ENCODE measurements at regions of chr12 and their contacts with region 1.

Region 1: GRCh38 chr12:51238510-51239334 is at the start of gene DAZAP2:
- DNase-seq: peak; percentile 92
- H3K4me3 Mint-ChIP-seq: peak within 1 kb of the TSS; percentile 96
- H3K27ac Mint-ChIP-seq: peak within 1 kb of the TSS; percentile 100
- H3K4me1 Mint-ChIP-seq: peaks cover 22% of the 10 kb centered on the region
- H3K27me3 Mint-ChIP-seq: no peaks in the 10 kb centered on the region
- CTCF ChIP-seq: no peak
- total RNA-seq, gene DAZAP2: 74.2 and 93.2 TPM in 2 replicates

Region 2: GRCh38 chr12:51083126-51083833 is 155.4 kb before region 1 on chr12 and contains the start of gene CSRNP2:
- CTCF ChIA-PET with region 1: no interaction called
- POLR2A ChIA-PET with region 1: interaction called, 23 read pairs
- intact Hi-C with region 1: no loop called
- DNase-seq: peak; percentile 93
- H3K4me3 Mint-ChIP-seq: peak within 1 kb of the TSS; percentile 88
- H3K27ac Mint-ChIP-seq: peak within 1 kb of the TSS; percentile 46
- H3K4me1 Mint-ChIP-seq: peaks cover 13% of the 10 kb centered on the region
- H3K27me3 Mint-ChIP-seq: no peaks in the 10 kb centered on the region
- CTCF ChIP-seq: no peak
- total RNA-seq, gene CSRNP2: 41.4 and 46.3 TPM in 2 replicates

Region 3: GRCh38 chr12:51172515-51173431 is 65.9 kb before region 1 on chr12 and contains the start of gene TFCP2:
- CTCF ChIA-PET with region 1: interaction called, 4 read pairs
- POLR2A ChIA-PET with region 1: interaction called, 18 read pairs
- intact Hi-C with region 1: no loop called
- DNase-seq: peak; percentile 95
- H3K4me3 Mint-ChIP-seq: no peak within 1 kb of the TSS
- H3K27ac Mint-ChIP-seq: no peak within 1 kb of the TSS
- H3K4me1 Mint-ChIP-seq: no peaks in the 10 kb centered on the region
- H3K27me3 Mint-ChIP-seq: no peaks in the 10 kb centered on the region
- CTCF ChIP-seq: no peak
- total RNA-seq, gene TFCP2: 31.5 and 34.9 TPM in 2 replicates

Region 4: DNA sequence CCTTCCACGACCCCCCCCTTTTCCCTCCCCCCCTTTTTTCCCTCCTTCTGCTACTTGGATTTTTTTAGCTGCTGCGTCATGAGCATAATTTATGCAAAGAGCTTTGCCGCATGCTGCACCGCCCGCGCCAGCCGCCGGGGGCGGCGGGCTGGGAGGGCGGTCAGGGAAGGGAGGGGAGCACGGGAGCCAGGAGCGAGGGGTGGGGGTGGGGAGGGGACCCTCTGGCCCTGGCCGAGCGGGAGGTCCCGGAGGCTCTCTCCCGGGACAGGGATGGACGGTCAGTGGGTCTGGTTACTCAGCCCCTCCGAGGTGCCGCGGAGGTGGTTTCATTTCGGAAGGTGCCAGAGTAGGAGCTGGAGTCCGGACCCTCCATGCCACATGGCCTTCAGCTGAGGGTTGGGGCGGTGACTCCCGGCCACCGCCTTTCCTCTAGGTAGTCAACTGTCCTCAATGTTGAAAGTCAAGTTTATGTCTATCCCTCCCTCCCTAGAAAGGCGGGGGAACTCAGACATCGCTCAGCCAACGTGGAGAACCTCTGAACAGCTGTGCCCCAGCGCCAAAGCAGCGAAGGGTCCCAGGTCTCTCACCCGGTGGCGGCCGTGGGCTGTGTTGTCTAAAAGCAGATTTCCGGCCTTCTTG is 20.6 kb before region 1 on chr12 and contains the start of gene POU6F1:
- CTCF ChIA-PET with region 1: no interaction called
- POLR2A ChIA-PET with region 1: interaction called, 38 read pairs
- intact Hi-C with region 1: loop called (anchors 1 kb)
- DNase-seq: peak; percentile 72
- H3K4me3 Mint-ChIP-seq: peak within 1 kb of the TSS; percentile 74
- H3K27ac Mint-ChIP-seq: peak within 1 kb of the TSS; percentile 85
- H3K4me1 Mint-ChIP-seq: peaks cover 6% of the 10 kb centered on the region
- H3K27me3 Mint-ChIP-seq: no peaks in the 10 kb centered on the region
- CTCF ChIP-seq: peak; percentile 65
- total RNA-seq, gene POU6F1: 3.0 and 3.8 TPM in 2 replicates

Region 5: DNA sequence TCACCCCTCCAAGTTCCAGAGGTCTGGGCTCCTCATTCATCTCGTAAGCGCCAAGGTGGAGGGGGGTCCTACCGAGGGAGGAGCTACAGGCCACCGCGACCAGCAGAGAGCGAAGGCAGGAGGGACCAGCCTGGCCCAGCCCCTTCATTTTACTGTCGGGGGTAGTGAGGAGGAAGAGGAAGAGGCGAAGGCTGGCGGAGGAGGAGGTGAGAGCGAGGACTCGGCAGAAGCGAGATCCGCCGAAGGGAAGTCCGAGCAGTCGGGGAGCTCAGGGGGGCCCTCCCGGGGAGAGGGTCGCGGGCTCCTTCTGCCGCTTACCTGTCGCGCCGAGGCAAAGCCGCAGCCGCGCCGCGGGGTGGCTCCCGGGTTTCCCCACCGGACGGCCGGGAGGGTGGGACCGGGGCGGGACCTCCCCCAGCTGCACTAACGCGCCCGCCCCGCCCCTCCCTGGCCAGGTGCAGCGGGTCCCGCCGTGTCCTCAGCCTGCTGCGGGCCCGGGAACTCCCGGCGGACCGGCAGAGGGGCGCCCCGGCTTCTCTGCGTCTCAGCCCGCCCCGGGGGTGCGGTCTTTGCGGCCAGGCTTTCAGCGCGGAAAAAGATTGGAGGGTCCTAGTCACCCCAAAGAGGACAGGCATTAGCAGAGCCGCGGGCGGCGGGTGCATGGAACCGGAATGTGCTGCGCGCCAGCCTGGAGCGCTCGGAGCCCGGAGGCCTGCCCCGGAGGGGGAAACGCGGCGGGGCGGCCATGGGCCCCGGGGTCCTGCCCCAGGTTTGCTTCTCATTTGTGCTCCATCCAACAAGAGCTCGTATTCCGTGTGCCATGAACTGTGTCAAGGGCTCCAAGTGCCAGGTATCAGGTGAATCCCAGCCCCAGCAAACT is 152.8 kb after region 1 on chr12 and contains the start of gene GALNT6:
- CTCF ChIA-PET with region 1: no interaction called
- POLR2A ChIA-PET with region 1: no interaction called
- intact Hi-C with region 1: no loop called
- DNase-seq: peak; percentile 58
- H3K4me3 Mint-ChIP-seq: peak within 1 kb of the TSS; percentile 95
- H3K27ac Mint-ChIP-seq: peak within 1 kb of the TSS; percentile 95
- H3K4me1 Mint-ChIP-seq: peaks cover 57% of the 10 kb centered on the region
- H3K27me3 Mint-ChIP-seq: no peaks in the 10 kb centered on the region
- CTCF ChIP-seq: no peak
- total RNA-seq, gene GALNT6: 24.8 and 27.6 TPM in 2 replicates